ENCODE measurements at regions of chr16 and their contacts with region 1.

Region 1: GRCh38 chr16:29926005-29926710 is at the start of gene KCTD13:
- H3K4me3 ChIP-seq: peak within 1 kb of the TSS; percentile 97
- H3K27ac ChIP-seq: peak within 1 kb of the TSS; percentile 73
- H3K4me1 ChIP-seq: peaks cover 4% of the 10 kb centered on the region; the same call in 1 of the 2 replicates
- CTCF ChIP-seq: no peak; the same call in 1 of the 2 replicates

Region 2: GRCh38 chr16:29775742-29776408 is 150.3 kb before region 1 on chr16:
- CTCF ChIA-PET with region 1: interaction called, 3 read pairs
- POLR2A ChIA-PET with region 1: interaction called, 10 read pairs
- H3K4me3 ChIP-seq: no peak overlapping the region
- H3K27ac ChIP-seq: no peak overlapping the region
- H3K4me1 ChIP-seq: no peaks in the 10 kb centered on the region
- CTCF ChIP-seq: no peak

Region 3: DNA sequence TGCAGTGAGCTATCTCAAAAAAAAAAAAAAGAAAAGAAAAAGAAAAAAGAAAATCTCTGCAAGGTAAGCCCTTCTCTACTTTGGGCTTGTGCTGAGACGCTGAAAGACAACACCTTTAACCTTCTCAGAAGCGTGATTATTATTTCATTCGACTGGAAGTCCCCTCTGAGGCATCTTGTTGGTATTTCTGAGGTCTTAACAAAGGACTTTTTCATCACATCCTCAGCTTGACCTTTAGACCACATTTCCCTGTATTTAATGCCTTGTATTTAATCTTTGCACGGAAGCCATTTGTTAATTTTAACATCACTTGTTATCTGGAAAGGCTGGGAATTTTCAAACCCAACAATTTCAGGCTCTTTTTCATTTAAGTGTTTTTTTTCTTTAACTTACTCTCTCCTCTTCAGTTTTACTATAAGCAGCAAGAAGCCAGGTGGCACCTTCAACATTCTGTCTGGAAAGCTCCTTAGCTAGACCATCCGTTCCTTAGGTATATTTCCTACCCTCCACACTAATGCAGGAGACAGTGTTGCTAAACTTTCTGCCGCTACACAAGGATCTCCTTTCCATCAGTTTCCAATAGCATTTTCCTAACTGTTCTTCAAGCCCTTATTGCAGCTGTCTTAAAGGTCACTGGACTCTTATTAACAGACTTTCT is 10.4 kb before region 1 on chr16:
- CTCF ChIA-PET with region 1: interaction called, 5 read pairs
- POLR2A ChIA-PET with region 1: interaction called, 22 read pairs
- H3K4me3 ChIP-seq: no peak overlapping the region
- H3K27ac ChIP-seq: no peak overlapping the region
- H3K4me1 ChIP-seq: no peaks in the 10 kb centered on the region
- CTCF ChIP-seq: no peak

Region 4: GRCh38 chr16:29943846-29944669 is 17.9 kb after region 1 on chr16:
- CTCF ChIA-PET with region 1: interaction called, 4 read pairs
- POLR2A ChIA-PET with region 1: interaction called, 16 read pairs
- H3K4me3 ChIP-seq: peak overlapping the region; percentile 24
- H3K27ac ChIP-seq: peak overlapping the region; percentile 60
- H3K4me1 ChIP-seq: peaks cover 7% of the 10 kb centered on the region; the same call in 1 of the 2 replicates
- CTCF ChIP-seq: peak; percentile 87

Region 5: GRCh38 chr16:29961479-29962343 is 35.6 kb after region 1 on chr16 and contains the start of gene TMEM219:
- CTCF ChIA-PET with region 1: interaction called, 7 read pairs
- POLR2A ChIA-PET with region 1: interaction called, 16 read pairs
- H3K4me3 ChIP-seq: peak within 1 kb of the TSS; percentile 57
- H3K27ac ChIP-seq: peak within 1 kb of the TSS; percentile 44; the same call in 1 of the 2 replicates
- H3K4me1 ChIP-seq: 0 out of 2 replicates have a peak, but pooled peaks cover 3% of the 10 kb centered on the region
- CTCF ChIP-seq: peak; percentile 94

Region 6: DNA sequence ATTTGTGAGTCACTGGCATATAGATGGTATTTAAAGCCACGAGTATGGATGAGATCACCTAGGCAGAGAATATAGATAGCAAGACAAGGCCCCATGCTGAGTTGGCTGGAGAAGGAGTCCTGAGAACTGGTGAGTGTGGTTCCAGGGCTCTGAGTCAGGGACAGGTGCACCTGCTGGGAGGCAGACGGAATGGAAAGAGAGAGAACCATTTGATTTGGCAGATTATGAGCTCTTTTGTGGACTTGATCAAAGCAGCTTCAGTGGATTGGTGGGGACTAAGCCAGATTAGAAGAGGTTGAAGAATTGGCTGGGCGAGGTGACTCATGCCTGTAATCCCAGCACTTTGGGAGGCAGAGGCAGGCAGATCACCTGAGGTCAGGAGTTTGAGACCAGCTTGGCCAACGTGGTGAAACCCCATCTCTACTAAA is 92.6 kb after region 1 on chr16:
- CTCF ChIA-PET with region 1: no interaction called
- POLR2A ChIA-PET with region 1: interaction called, 10 read pairs
- H3K4me3 ChIP-seq: no peak overlapping the region
- H3K27ac ChIP-seq: no peak overlapping the region
- H3K4me1 ChIP-seq: no peaks in the 10 kb centered on the region
- CTCF ChIP-seq: no peak

Region 7: GRCh38 chr16:30112197-30113030 is 186.3 kb after region 1 on chr16:
- CTCF ChIA-PET with region 1: no interaction called
- POLR2A ChIA-PET with region 1: no interaction called
- H3K4me3 ChIP-seq: no peak overlapping the region
- H3K27ac ChIP-seq: no peak overlapping the region
- H3K4me1 ChIP-seq: no peaks in the 10 kb centered on the region
- CTCF ChIP-seq: peak; percentile 84

Measured in HEK293 (cell line).